Vagina (tissue), 2 donors: ENCODE measurements at regions of chr1 and their contacts with region 1.

Region 1: GRCh38 chr1:150515328-150516048 is at the start of gene FALEC:
- DNase-seq: peak in 1 of 2 donors; percentile 97
- H3K4me3 ChIP-seq: peak within 1 kb of the TSS; percentile 59 to 60
- H3K27ac ChIP-seq: peak within 1 kb of the TSS; percentile 91
- H3K4me1 ChIP-seq: peaks cover 29% of the 10 kb centered on the region
- H3K27me3 ChIP-seq: no peaks in the 10 kb centered on the region
- CTCF ChIP-seq: peak in 1 of 3 experiments; percentile 15
- POLR2A ChIP-seq: no peak
- total RNA-seq, gene FALEC: not detected

Region 2: GRCh38 chr1:150383631-150384324 is 131.7 kb before region 1 on chr1:
- intact Hi-C with region 1: no loop called
- DNase-seq: no peak
- H3K4me3 ChIP-seq: no peak overlapping the region
- H3K27ac ChIP-seq: no peak overlapping the region
- H3K4me1 ChIP-seq: peaks cover 25% of the 10 kb centered on the region
- H3K27me3 ChIP-seq: no peaks in the 10 kb centered on the region
- CTCF ChIP-seq: no peak
- POLR2A ChIP-seq: no peak

Region 3: DNA sequence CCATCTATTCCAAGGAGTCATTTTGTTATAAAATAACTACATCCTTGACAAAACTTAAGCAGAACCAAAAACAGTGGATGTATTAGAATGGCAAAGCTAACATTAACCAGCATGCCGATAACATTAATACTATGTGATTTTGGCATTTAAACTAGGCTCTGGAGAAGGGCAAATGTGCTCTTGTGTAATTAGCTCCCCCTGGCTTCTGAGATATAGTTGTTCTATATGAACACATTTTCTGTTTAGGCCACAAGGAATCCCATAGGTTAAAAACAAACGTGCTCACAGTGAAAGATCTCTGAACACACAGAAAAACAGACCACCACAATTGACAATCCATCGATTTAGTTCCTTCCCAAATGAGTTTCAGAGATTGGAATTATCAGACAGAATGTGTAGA is 85.7 kb before region 1 on chr1:
- intact Hi-C with region 1: no loop called
- DNase-seq: no peak
- H3K4me3 ChIP-seq: no peak overlapping the region
- H3K27ac ChIP-seq: no peak overlapping the region
- H3K4me1 ChIP-seq: no peaks in the 10 kb centered on the region
- H3K27me3 ChIP-seq: no peaks in the 10 kb centered on the region
- CTCF ChIP-seq: no peak
- POLR2A ChIP-seq: no peak

Region 4: DNA sequence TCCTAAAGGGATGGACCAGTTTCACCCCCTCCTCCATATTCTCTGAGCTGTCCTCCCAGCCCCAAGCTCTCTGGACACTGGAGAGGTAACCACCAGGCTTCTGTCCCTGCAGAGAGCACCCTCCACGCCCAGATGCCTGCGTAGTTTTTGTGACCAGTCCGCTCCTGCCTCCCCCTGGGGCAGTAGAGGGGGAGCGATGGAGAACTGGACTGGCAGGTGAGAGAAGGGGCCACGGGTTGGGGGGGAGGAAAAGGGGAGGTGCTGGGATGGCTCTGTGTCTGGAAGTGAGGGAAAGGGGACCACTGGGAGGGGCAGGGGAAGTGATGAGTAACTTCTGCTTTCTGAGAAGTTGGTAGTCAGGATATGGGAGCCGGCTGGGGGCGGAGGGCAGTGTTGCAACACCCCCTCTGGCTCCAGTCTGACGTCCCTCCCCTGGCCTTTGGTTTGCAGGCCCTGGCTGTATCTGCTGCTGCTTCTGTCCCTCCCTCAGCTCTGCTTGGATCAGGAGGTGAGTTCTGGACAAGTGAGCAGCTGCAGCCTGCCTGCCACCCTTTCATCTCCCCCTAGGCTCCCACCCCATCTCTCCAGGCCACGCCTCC is 36.7 kb after region 1 on chr1:
- intact Hi-C with region 1: loop called (anchors 5 kb)
- DNase-seq: peak in 1 of 2 donors; percentile 99
- H3K4me3 ChIP-seq: no peak overlapping the region
- H3K27ac ChIP-seq: peak overlapping the region; percentile 94
- H3K4me1 ChIP-seq: peaks cover 47% of the 10 kb centered on the region
- H3K27me3 ChIP-seq: no peaks in the 10 kb centered on the region
- CTCF ChIP-seq: no peak
- POLR2A ChIP-seq: peak in 1 of 2 donors; percentile 3